Heart left ventricle (tissue), 16 donors: ENCODE measurements at regions of chr18 and their contacts with region 1.

Region 1: DNA sequence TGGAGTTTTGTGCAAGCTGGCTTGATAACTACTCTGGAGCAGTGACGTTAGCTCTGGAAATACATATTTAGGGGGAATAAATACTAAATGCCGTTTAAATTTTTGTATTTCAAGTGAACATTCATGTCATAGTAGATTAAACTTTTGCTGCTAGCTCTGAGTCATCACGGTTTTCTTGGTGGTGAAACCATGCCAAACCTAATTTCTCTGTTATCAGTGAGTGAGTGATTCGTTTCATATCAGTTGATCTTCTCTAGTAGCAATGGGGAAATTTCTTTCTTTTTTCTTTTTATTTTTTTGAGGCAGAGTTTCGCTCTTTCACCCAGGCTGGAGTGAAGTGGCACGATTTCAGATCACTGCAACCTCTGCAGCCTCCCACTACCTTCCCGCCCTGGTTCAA is 211.1 kb downstream of the PTPRM start:
- DNase-seq: no peak
- ATAC-seq: no peak
- H3K4me3 ChIP-seq: no peak overlapping the region
- H3K27ac ChIP-seq: no peak overlapping the region
- H3K4me1 ChIP-seq: peaks cover 0 to 28% (median 9%) of the 10 kb centered on the region in 12 donors
- H3K27me3 ChIP-seq: no peaks in the 10 kb centered on the region
- CTCF ChIP-seq: no peak
- POLR2A ChIP-seq: no peak

Region 2: DNA sequence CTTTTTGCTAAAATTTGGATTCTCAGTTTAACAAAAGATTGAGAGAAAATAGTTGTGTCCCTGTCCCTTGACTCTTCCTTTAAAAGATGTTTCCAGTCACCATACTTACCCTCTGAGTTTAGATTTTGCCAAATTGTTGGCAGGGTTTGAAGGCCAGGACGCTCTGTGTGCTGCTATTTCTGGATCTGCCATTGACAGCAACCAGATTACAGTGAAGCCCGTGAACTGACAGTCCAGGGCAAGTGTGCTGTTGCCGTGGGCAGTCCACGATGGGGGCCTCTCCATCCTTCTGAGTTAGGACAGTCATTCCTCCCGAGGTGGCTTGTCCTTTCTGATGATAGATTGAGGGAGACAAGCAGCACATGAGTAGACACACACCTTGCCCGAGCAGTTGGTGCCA is 121.1 kb before region 1 on chr18:
- intact Hi-C with region 1: no loop called
- DNase-seq: peak in 4 of 5 donors; percentile 51 to 76 (median 60)
- ATAC-seq: peak; percentile 96 to 98 (median 97)
- H3K4me3 ChIP-seq: no peak overlapping the region
- H3K27ac ChIP-seq: peak overlapping the region; percentile 57 to 95 (median 74)
- H3K4me1 ChIP-seq: peaks cover 2 to 64% (median 34%) of the 10 kb centered on the region in 12 donors
- H3K27me3 ChIP-seq: no peaks in the 10 kb centered on the region
- CTCF ChIP-seq: no peak
- POLR2A ChIP-seq: no peak

Region 3: DNA sequence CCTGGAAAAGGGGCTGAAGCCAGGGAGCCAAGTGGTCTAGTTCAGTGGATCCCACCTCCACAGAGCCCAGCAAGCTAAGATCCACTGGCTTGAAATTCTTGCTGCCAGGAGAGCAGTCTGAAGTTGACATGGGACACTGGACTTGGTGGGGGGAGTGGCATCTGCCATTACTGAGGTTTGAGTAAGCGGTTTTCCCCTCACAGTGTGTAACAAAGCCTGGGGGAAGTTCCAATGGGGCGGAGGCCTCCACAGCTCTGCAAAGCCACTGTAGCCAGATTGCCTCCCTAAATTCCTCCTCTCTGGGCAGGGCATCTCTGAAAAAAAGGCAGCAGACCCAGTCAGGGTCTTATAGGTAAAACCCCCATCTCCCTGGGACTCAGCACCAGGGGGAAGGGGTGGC is 66.7 kb before region 1 on chr18:
- intact Hi-C with region 1: no loop called
- DNase-seq: no peak
- ATAC-seq: no peak
- H3K4me3 ChIP-seq: no peak overlapping the region
- H3K27ac ChIP-seq: no peak overlapping the region
- H3K4me1 ChIP-seq: peaks cover 0 to 19% (median 11%) of the 10 kb centered on the region in 12 donors
- H3K27me3 ChIP-seq: no peaks in the 10 kb centered on the region
- CTCF ChIP-seq: no peak
- POLR2A ChIP-seq: no peak

Region 4: GRCh38 chr18:8375249-8375648 is 597.1 kb after region 1 on chr18:
- intact Hi-C with region 1: loop called in 2 of 10 experiments (anchors 10 kb)
- DNase-seq: no peak
- ATAC-seq: peak in 1 of 4 donors; percentile 20
- H3K4me3 ChIP-seq: no peak overlapping the region
- H3K27ac ChIP-seq: no peak overlapping the region
- H3K4me1 ChIP-seq: no peaks in the 10 kb centered on the region
- H3K27me3 ChIP-seq: no peaks in the 10 kb centered on the region
- CTCF ChIP-seq: no peak
- POLR2A ChIP-seq: no peak